ENCODE measurements at regions of chr12 and their contacts with region 1.

Region 1: GRCh38 chr12:55073043-55074022 is 52.9 kb upstream of the OR9K2 start:
- DNase-seq: peak; percentile 46 to 50
- H3K4me3 ChIP-seq: no peak overlapping the region
- H3K27ac ChIP-seq: no peak overlapping the region
- H3K4me1 ChIP-seq: no peaks in the 10 kb centered on the region
- H3K27me3 ChIP-seq: no peaks in the 10 kb centered on the region
- CTCF ChIP-seq: peak; percentile 56 to 78 (median 62)
- POLR2A ChIP-seq: no peak

Region 2: DNA sequence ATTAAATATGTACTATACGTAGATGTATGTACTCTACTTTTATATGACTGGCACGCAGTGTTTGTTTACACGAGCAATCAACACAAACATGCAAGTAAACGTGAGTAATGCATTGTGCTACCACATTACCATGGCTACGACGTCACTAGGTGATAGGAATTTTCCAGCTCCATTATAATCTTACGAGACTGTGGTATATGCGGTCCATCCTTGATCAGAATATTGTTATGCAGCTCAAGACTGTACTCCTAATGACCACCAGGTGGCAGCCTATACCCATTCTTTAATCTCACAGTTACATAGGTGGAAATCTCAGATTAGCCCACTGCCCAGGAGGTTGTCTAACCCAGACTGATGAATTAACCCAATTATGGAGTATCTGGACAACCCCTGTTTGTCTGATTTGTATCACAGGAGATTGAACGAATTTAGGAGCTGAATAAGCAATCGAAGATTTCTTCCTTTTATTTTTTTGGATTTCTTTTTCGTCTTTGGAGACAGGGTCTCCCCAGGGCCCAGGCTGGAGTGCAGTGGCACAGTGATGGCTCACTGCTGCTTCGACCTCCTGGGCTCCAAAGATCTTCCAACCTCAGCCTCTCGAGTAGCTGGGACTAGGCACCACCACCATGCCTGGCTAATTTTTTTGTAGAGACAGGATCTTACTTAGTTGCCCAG is 80.0 kb before region 1 on chr12:
- intact Hi-C with region 1: loop called (anchors 10 kb)
- DNase-seq: peak in 1 of 2 donors; percentile 34
- H3K4me3 ChIP-seq: no peak overlapping the region
- H3K27ac ChIP-seq: no peak overlapping the region
- H3K4me1 ChIP-seq: no peaks in the 10 kb centered on the region
- H3K27me3 ChIP-seq: no peaks in the 10 kb centered on the region
- CTCF ChIP-seq: peak; percentile 74 to 84 (median 78)
- POLR2A ChIP-seq: no peak

Region 3: DNA sequence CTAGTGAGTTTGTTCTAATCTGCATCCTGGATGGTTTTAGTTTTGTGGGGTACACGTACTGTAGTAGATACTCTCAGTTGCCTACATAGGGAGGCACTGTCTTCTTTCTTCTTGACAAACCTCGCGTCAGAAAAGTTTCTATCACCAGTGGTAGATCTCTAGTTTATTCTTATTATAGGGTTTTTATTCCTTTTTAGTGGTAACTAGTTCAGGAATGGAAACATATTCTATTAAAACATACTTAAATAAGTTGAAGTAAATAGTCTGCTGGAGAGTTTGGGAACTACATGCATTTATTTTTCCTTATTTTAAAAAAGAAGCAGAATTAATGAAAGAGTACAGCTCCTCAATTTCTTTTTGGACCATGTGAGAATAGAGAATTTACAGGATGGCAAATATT is 19.2 kb after region 1 on chr12:
- intact Hi-C with region 1: no loop called
- DNase-seq: no peak
- H3K4me3 ChIP-seq: no peak overlapping the region
- H3K27ac ChIP-seq: no peak overlapping the region
- H3K4me1 ChIP-seq: no peaks in the 10 kb centered on the region
- H3K27me3 ChIP-seq: no peaks in the 10 kb centered on the region
- CTCF ChIP-seq: no peak
- POLR2A ChIP-seq: no peak